ENCODE measurements at regions of chr6 and their contacts with region 1.

Region 1: DNA sequence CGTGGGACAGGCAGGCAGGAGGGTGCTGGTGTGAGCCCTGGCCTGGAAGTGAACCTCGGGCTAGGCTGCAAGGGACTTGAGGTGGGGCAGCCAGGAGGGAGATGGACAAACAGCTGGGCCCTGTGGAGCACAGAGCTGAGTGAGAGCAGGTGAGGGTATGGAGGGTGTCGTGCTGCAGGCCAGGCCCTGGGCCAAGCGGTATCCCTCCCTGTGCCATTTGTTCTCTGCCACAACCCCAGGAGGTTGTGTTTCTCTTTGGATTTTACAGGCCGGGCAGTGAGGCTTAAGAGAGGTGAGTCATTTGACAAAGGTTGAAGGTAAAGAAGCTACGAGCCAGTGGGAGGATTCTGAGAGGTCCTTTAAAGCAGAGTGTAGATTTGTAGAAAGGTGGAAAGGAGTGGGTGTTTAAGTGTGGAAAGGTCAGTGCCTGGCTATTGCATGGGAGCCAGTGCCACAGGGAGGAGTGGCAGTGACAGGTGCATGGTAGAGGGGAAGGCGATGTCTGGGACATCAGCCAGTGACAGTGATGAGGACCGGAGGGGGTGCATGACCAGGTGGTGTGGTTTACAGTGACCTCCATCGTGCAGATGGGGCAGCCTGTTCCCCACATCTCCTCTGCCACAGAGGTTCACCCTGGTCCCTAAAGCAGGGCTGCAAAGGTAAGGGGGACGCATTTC is 39.8 kb downstream of the GMPR start:
- DNase-seq: no peak
- H3K4me3 ChIP-seq: no peak overlapping the region
- H3K27ac ChIP-seq: no peak overlapping the region
- H3K4me1 ChIP-seq: peaks cover 8% of the 10 kb centered on the region
- H3K27me3 ChIP-seq: no peaks in the 10 kb centered on the region
- CTCF ChIP-seq: no peak

Region 2: GRCh38 chr6:18207438-18207837 is 1929.3 kb after region 1 on chr6:
- CTCF ChIA-PET with region 1: no interaction called
- POLR2A ChIA-PET with region 1: interaction called, 13 read pairs
- intact Hi-C with region 1: no loop called
- DNase-seq: no peak
- H3K4me3 ChIP-seq: no peak overlapping the region
- H3K27ac ChIP-seq: no peak overlapping the region
- H3K4me1 ChIP-seq: no peaks in the 10 kb centered on the region
- H3K27me3 ChIP-seq: no peaks in the 10 kb centered on the region
- CTCF ChIP-seq: no peak